H1 (cell line): ENCODE measurements at regions of chr3 and their contacts with region 1.

Region 1: GRCh38 chr3:62558549-62559112 is 185.3 kb upstream of the FEZF2 start:
- DNase-seq: peak; percentile 36 to 72
- H3K4me3 ChIP-seq: no peak overlapping the region
- H3K27ac ChIP-seq: no peak overlapping the region
- H3K4me1 ChIP-seq: peaks cover 0 to 10% (median 5%) of the 10 kb centered on the region in 4 experiments; a peak in 2 of 7 replicates
- H3K27me3 ChIP-seq: no peaks in the 10 kb centered on the region
- CTCF ChIP-seq: peak; percentile 46 to 87 (median 73)
- EP300 ChIP-seq: no peak
- POLR2A ChIP-seq: no peak
- RAD21 ChIP-seq: peak; percentile 90 to 91

Region 2: GRCh38 chr3:62229920-62230319 is 328.7 kb before region 1 on chr3:
- CTCF ChIA-PET with region 1: interaction called, 12 read pairs
- POLR2A ChIA-PET with region 1: no interaction called
- DNase-seq: no peak
- H3K4me3 ChIP-seq: no peak overlapping the region
- H3K27ac ChIP-seq: no peak overlapping the region
- H3K4me1 ChIP-seq: peaks cover 0 to 3% (median 0%) of the 10 kb centered on the region in 4 experiments; a peak in 3 of 7 replicates
- H3K27me3 ChIP-seq: no peaks in the 10 kb centered on the region
- CTCF ChIP-seq: peak in 2 of 3 experiments; percentile 33 to 59; a peak in 2 of 4 replicates
- EP300 ChIP-seq: no peak
- POLR2A ChIP-seq: no peak
- RAD21 ChIP-seq: peak in 1 of 2 experiments; percentile 39; a peak in 3 of 4 replicates

Region 3: DNA sequence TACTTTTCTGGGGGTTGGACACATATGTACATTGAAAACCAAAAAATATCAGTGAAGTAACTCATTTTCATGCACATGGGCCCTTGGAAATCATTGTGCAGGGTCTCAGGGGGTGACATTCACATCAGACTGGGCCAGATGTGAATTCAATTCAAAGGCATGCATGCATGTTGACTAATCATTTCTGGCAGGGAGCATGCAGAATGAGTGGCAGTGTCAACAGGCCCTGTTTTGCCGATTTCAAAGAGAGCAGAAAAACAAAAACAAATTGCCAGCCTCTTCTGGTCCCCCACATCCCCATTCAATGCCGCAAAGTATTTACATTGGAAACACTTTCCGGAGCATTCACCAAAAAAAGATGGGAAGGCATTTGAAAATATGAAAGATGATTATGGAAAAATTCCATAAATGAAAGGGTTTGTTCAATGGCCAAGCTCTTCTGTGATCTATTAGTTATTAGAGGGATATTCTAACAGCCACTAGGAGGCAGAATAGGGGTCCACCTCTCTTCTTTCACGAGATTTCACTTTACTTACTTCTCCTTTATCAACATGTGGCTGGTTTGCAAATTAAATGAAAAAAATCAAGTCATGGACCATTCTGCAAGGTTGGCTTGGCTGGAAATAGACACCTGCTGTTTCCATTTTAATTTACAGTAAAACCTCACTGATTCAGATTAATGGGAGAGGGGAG is 65.4 kb before region 1 on chr3:
- CTCF ChIA-PET with region 1: interaction called, 10 read pairs
- POLR2A ChIA-PET with region 1: no interaction called
- DNase-seq: no peak
- H3K4me3 ChIP-seq: no peak overlapping the region
- H3K27ac ChIP-seq: no peak overlapping the region
- H3K4me1 ChIP-seq: no peaks in the 10 kb centered on the region
- H3K27me3 ChIP-seq: no peaks in the 10 kb centered on the region
- CTCF ChIP-seq: peak in 2 of 3 experiments; percentile 30 to 62; a peak in 2 of 4 replicates
- EP300 ChIP-seq: no peak
- POLR2A ChIP-seq: no peak
- RAD21 ChIP-seq: peak; percentile 37 to 51

Region 4: GRCh38 chr3:62531490-62531889 is 27.1 kb before region 1 on chr3:
- CTCF ChIA-PET with region 1: interaction called, 11 read pairs
- POLR2A ChIA-PET with region 1: interaction called, 3 read pairs
- DNase-seq: no peak
- H3K4me3 ChIP-seq: no peak overlapping the region
- H3K27ac ChIP-seq: no peak overlapping the region
- H3K4me1 ChIP-seq: no peaks in the 10 kb centered on the region
- H3K27me3 ChIP-seq: no peaks in the 10 kb centered on the region
- CTCF ChIP-seq: peak in 1 of 3 experiments; percentile 29; a peak in 1 of 4 replicates
- EP300 ChIP-seq: no peak
- POLR2A ChIP-seq: no peak
- RAD21 ChIP-seq: peak; percentile 24 to 44; a peak in 3 of 4 replicates

Region 5: GRCh38 chr3:62546266-62546665 is 12.4 kb before region 1 on chr3:
- CTCF ChIA-PET with region 1: interaction called, 29 read pairs
- POLR2A ChIA-PET with region 1: no interaction called
- DNase-seq: no peak
- H3K4me3 ChIP-seq: no peak overlapping the region
- H3K27ac ChIP-seq: no peak overlapping the region
- H3K4me1 ChIP-seq: peaks cover 0 to 10% (median 3%) of the 10 kb centered on the region in 4 experiments; a peak in 6 of 7 replicates
- H3K27me3 ChIP-seq: peaks cover 0 to 1% (median 0%) of the 10 kb centered on the region in 4 experiments; a peak in 1 of 7 replicates
- CTCF ChIP-seq: no peak
- EP300 ChIP-seq: no peak
- POLR2A ChIP-seq: no peak
- RAD21 ChIP-seq: no peak